Activated naive CD4-positive, alpha-beta T cell treated with anti-CD3 and anti-CD28 coated beads, Interleukin-2, amount 10 ng/mL, durations not matched to agents 7 days and 5 days (primary cell): ENCODE measurements at regions of chr2 and their contacts with region 1.

Region 1: GRCh38 chr2:181430406-181431118 is 26.6 kb upstream of the ITGA4 start:
- DNase-seq: no peak
- H3K4me3 Mint-ChIP-seq: no peak overlapping the region
- H3K27ac Mint-ChIP-seq: no peak overlapping the region
- H3K4me1 Mint-ChIP-seq: peaks cover 10% of the 10 kb centered on the region
- H3K27me3 Mint-ChIP-seq: no peaks in the 10 kb centered on the region

Region 2: GRCh38 chr2:181340891-181341290 is 89.7 kb before region 1 on chr2:
- CTCF ChIA-PET with region 1: no interaction called
- DNase-seq: no peak
- H3K4me3 Mint-ChIP-seq: no peak overlapping the region
- H3K27ac Mint-ChIP-seq: no peak overlapping the region
- H3K4me1 Mint-ChIP-seq: no peaks in the 10 kb centered on the region
- H3K27me3 Mint-ChIP-seq: no peaks in the 10 kb centered on the region

Region 3: GRCh38 chr2:181419129-181419855 is 11.3 kb before region 1 on chr2:
- CTCF ChIA-PET with region 1: no interaction called
- DNase-seq: no peak
- H3K4me3 Mint-ChIP-seq: no peak overlapping the region
- H3K27ac Mint-ChIP-seq: no peak overlapping the region
- H3K4me1 Mint-ChIP-seq: peaks cover 22% of the 10 kb centered on the region
- H3K27me3 Mint-ChIP-seq: no peaks in the 10 kb centered on the region

Region 4: DNA sequence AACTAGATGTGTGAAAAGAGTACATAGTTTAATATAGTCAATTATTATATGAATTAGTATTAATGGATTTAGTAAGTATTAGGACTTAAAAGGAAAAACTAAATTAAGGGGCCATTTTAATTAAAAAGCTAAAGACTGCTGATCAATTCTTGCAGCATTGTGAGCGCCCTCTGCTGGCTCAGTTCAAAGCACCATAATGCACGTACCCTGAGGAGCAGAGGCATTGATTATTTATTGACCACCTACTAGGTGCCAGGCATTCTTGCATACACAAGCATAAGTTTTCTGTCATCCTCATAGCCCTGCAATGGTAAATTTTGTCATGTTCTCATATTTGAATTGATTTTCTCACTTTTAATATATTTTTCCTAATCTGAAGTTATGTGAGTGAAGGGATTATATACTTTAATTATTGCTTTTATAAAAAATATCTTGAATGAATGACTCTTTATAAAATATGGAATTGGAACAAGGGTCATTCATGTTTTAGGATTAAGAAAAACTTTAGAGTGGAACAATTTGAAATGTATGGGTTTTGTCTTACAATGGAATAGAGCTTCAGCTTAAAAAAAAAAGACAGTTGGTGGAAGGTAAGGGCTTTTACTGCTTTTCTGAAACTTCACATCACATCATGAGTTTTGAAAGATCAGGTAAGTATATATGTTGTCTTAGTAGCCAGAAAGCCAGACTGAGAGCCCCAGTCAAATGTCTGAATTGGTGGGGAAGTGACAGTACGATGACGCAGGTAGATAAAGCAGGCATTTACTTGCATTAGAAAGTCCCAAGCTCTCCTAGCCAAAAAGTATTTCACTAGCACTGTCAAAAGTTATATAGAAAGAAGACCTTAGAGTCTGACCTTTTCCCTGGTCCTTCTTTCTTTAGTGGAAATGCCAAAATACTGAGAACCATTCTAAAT is 36.4 kb after region 1 on chr2:
- CTCF ChIA-PET with region 1: interaction called, 10 read pairs
- DNase-seq: peak; percentile 85
- H3K4me3 Mint-ChIP-seq: peak overlapping the region; percentile 21
- H3K27ac Mint-ChIP-seq: peak overlapping the region; percentile 40
- H3K4me1 Mint-ChIP-seq: peaks cover 92% of the 10 kb centered on the region
- H3K27me3 Mint-ChIP-seq: no peaks in the 10 kb centered on the region